ENCODE measurements at regions of chr1 and their contacts with region 1.

Region 1: GRCh38 chr1:33295450-33296081 is 25.3 kb downstream of the A3GALT2 start:
- DNase-seq: peak; percentile 91
- H3K4me3 Mint-ChIP-seq: no peak overlapping the region
- H3K27ac Mint-ChIP-seq: no peak overlapping the region
- H3K4me1 Mint-ChIP-seq: no peaks in the 10 kb centered on the region
- H3K27me3 Mint-ChIP-seq: no peaks in the 10 kb centered on the region
- CTCF ChIP-seq: peak; percentile 95

Region 2: GRCh38 chr1:33111970-33112369 is 183.6 kb before region 1 on chr1:
- CTCF ChIA-PET with region 1: no interaction called
- intact Hi-C with region 1: loop called (anchors 5 kb)
- DNase-seq: no peak
- H3K4me3 Mint-ChIP-seq: no peak overlapping the region
- H3K27ac Mint-ChIP-seq: no peak overlapping the region
- H3K4me1 Mint-ChIP-seq: no peaks in the 10 kb centered on the region
- H3K27me3 Mint-ChIP-seq: no peaks in the 10 kb centered on the region
- CTCF ChIP-seq: no peak

Region 3: DNA sequence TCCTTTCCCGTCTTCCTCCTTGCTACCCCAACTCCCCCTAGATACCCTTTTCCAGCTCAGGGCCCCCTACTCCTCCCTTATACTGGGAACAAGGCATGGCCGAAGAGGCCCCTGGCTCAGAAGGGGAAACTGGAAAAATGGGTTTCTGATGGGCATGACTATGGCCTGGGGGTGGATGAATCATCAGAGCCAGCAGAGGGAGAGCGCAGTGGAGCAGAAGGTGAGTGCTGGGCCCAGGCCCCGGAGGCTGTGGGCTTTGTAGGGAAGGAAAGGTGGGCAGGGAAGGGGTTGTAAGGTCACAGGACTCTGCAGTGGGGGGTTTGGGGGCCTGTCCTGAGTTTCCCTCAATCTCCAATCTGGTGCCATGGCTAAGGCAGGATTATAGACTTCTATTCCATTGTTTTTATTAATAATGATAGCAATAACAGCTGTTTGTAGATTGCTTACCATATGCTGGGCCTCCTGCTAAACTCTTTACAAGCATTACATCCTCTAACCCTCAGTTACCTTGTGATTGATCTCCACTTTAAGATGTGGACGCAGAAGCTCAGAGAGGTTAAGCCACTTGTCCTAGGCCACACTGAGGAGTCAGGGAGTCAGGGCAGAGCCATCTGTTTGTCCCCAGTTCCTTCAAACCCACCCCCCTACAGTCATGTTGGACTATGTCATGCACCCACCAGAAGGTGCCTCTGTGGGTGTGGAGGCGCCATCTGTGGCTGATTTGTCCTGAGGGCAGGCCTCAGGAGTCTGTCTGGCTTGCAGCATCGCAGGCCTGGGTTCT is 75.5 kb before region 1 on chr1:
- CTCF ChIA-PET with region 1: interaction called, 9 read pairs
- intact Hi-C with region 1: loop called (anchors 5 kb)
- DNase-seq: peak; percentile 80
- H3K4me3 Mint-ChIP-seq: no peak overlapping the region
- H3K27ac Mint-ChIP-seq: peak overlapping the region; percentile 83
- H3K4me1 Mint-ChIP-seq: peaks cover 34% of the 10 kb centered on the region
- H3K27me3 Mint-ChIP-seq: no peaks in the 10 kb centered on the region
- CTCF ChIP-seq: no peak

Region 4: DNA sequence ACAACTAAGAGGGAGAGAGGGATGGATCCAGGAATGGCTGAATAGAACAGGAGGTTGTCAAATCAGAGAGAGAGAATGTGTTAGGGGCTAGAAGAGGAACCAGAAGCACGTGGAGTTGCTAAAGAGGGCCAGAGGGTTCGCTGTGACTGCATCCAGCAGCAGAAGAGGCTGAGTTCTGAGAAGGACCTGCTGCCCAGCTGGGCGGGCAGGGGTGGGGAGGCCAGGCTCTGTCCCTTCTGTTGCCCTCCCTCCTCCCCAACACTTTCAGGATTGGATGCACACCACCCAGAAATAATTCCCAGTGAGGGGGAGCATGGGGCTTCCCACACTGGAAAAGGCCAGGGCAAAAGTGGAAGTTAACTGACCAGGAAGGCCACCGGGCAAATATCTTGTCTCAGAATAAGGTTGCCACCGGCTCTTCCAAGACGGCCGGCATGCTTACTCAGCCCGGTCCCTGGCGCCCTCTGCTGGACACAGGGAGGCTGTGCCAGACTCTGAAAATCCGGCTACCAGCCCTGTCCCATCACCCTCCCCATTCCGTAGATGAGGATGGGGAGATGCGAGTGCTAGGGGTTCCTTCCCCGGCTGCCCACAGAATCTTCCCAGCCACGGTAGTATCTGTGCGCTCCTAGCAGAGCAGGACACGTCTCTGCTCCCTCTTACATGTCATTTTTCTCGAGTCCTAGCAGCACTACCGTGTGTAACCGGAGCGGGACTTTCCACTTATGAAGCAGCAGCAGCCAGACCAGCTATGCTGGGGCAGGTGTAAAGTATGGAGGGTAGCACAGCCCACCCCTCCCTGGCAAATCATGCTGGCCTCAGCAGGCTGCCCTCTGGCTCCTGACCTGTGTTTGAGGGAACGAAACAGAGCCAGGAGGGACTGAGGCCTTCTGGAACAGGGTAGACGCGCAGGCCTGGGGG is 72.2 kb after region 1 on chr1:
- CTCF ChIA-PET with region 1: interaction called, 8 read pairs
- intact Hi-C with region 1: loop called (anchors 1 kb)
- DNase-seq: peak; percentile 90
- H3K4me3 Mint-ChIP-seq: peak overlapping the region; percentile 16
- H3K27ac Mint-ChIP-seq: no peak overlapping the region
- H3K4me1 Mint-ChIP-seq: no peaks in the 10 kb centered on the region
- H3K27me3 Mint-ChIP-seq: no peaks in the 10 kb centered on the region
- CTCF ChIP-seq: peak; percentile 91

Region 5: GRCh38 chr1:33399375-33399774 is 103.8 kb after region 1 on chr1:
- CTCF ChIA-PET with region 1: no interaction called
- intact Hi-C with region 1: no loop called
- DNase-seq: no peak
- H3K4me3 Mint-ChIP-seq: no peak overlapping the region
- H3K27ac Mint-ChIP-seq: no peak overlapping the region
- H3K4me1 Mint-ChIP-seq: no peaks in the 10 kb centered on the region
- H3K27me3 Mint-ChIP-seq: no peaks in the 10 kb centered on the region
- CTCF ChIP-seq: no peak

Region 6: GRCh38 chr1:33443080-33443704 is 147.6 kb after region 1 on chr1:
- CTCF ChIA-PET with region 1: no interaction called
- intact Hi-C with region 1: no loop called
- DNase-seq: no peak
- H3K4me3 Mint-ChIP-seq: no peak overlapping the region
- H3K27ac Mint-ChIP-seq: no peak overlapping the region
- H3K4me1 Mint-ChIP-seq: peaks cover 11% of the 10 kb centered on the region
- H3K27me3 Mint-ChIP-seq: peaks cover 29% of the 10 kb centered on the region
- CTCF ChIP-seq: no peak

Region 7: GRCh38 chr1:33455539-33456501 is 160.3 kb after region 1 on chr1:
- CTCF ChIA-PET with region 1: interaction called, 11 read pairs
- intact Hi-C with region 1: loop called (anchors 1 kb)
- DNase-seq: peak; percentile 49
- H3K4me3 Mint-ChIP-seq: no peak overlapping the region
- H3K27ac Mint-ChIP-seq: no peak overlapping the region
- H3K4me1 Mint-ChIP-seq: peaks cover 17% of the 10 kb centered on the region
- H3K27me3 Mint-ChIP-seq: peaks cover 28% of the 10 kb centered on the region
- CTCF ChIP-seq: peak; percentile 51

Region 8: DNA sequence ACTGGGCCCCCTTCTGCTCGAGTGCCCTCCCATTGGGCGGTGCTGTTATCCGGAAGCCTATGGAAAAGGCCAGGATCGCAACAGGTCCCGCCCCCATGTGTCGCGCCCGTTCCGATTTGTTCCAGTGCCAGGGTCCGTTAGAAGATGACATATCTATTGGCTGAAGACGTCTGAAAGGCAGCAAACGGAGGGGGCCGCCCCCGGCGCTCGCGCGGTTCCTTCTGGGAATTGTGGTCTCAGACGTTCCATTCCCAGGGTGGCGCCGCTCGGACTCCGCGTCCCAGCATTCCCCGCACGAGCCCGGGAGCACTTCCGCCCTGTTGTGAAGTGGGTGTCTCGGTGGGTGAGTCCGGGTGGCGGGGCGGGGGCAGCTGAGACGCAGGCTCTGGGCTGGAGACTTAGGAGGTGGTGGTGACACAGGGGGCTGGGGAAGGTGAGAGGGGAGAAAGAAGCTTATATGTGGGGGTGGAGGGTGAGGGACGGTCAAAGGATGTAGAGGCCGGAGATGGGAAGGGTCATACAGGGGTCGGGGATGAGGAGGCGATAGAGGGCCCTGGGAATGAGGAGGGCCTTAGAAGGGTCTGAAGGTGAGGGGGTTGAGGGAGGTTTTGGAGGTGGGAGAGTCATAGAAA is 176.9 kb after region 1 on chr1 and contains the start of gene ZSCAN20:
- CTCF ChIA-PET with region 1: interaction called, 6 read pairs
- intact Hi-C with region 1: loop called (anchors 1 kb)
- DNase-seq: peak; percentile 97
- H3K4me3 Mint-ChIP-seq: peak within 1 kb of the TSS; percentile 56
- H3K27ac Mint-ChIP-seq: peak within 1 kb of the TSS; percentile 25
- H3K4me1 Mint-ChIP-seq: peaks cover 20% of the 10 kb centered on the region
- H3K27me3 Mint-ChIP-seq: peaks cover 13% of the 10 kb centered on the region
- CTCF ChIP-seq: no peak
- total RNA-seq, gene ZSCAN20: 6.6 and 8.2 TPM in 2 replicates

Region 9: DNA sequence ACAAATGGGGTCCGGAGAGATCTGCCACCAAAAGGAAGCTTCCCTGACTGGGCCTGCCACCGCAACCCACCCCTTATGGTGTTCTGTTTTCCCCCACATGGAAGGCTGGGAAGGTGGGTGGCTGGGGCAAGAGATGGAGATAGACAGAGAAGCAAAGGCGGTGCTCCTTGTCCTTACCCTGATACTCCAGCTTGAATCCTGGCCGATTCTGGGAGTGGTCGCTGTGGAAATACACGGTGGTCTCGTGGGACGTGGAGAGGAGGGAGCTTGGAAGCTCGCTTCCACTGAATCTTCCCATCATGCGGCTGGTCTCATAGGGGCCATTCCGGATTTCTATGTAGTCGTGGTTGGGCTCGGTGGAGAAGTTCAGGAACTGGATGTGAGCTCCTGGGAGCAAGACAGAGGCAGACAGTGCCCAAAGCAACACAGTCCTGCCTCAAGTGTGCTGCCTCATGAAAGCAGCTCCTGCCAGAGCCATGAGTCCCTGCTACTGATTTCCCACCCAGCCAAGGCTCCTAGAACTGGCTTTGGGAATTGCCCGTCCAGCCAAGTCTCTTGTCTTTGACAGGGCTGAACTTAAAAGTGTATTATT is 315.4 kb after region 1 on chr1:
- CTCF ChIA-PET with region 1: interaction called, 6 read pairs
- intact Hi-C with region 1: loop called (anchors 5 kb)
- DNase-seq: no peak
- H3K4me3 Mint-ChIP-seq: no peak overlapping the region
- H3K27ac Mint-ChIP-seq: no peak overlapping the region
- H3K4me1 Mint-ChIP-seq: no peaks in the 10 kb centered on the region
- H3K27me3 Mint-ChIP-seq: peaks cover 70% of the 10 kb centered on the region
- CTCF ChIP-seq: no peak

Measured in Calu3 (cell line).